Activated CD4-positive, alpha-beta T cell treated with anti-CD3 and anti-CD28 coated beads, Interleukin-2, amount 10 ng/mL, durations not matched to agents 24 days and 14 days (primary cell): ENCODE measurements at regions of chr10 and their contacts with region 1.

Region 1: DNA sequence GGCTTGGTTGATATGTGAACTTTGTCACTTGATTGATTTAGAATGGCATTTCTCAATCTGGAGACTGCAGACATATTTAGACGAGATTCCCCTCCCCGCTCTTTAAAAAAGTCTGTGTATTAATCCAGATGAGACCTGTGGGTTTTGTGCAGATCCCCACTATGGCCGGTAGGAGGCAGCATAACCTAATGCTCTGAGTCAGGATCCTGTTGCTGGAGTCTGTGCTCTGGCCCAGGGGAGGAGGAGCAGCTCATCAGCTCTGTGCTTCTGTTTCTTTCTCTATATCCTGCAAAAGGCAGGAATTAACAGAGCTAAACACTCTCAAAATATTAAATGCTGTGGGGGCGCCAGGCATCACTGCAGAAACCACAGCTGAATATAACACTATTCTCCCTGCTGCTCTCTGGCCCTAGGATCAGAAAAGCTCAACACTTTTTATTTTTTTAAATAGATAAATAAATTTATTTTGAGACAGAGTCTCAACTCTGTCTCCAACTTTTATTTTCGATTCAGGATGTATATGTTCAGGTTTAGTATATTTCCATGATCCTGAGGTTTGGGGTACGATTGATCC is 23.9 kb upstream of the SEPHS1 start:
- DNase-seq: peak; percentile 92
- H3K4me3 Mint-ChIP-seq: no peak overlapping the region
- H3K27ac Mint-ChIP-seq: no peak overlapping the region
- H3K4me1 Mint-ChIP-seq: no peaks in the 10 kb centered on the region
- H3K27me3 Mint-ChIP-seq: no peaks in the 10 kb centered on the region

Region 2: DNA sequence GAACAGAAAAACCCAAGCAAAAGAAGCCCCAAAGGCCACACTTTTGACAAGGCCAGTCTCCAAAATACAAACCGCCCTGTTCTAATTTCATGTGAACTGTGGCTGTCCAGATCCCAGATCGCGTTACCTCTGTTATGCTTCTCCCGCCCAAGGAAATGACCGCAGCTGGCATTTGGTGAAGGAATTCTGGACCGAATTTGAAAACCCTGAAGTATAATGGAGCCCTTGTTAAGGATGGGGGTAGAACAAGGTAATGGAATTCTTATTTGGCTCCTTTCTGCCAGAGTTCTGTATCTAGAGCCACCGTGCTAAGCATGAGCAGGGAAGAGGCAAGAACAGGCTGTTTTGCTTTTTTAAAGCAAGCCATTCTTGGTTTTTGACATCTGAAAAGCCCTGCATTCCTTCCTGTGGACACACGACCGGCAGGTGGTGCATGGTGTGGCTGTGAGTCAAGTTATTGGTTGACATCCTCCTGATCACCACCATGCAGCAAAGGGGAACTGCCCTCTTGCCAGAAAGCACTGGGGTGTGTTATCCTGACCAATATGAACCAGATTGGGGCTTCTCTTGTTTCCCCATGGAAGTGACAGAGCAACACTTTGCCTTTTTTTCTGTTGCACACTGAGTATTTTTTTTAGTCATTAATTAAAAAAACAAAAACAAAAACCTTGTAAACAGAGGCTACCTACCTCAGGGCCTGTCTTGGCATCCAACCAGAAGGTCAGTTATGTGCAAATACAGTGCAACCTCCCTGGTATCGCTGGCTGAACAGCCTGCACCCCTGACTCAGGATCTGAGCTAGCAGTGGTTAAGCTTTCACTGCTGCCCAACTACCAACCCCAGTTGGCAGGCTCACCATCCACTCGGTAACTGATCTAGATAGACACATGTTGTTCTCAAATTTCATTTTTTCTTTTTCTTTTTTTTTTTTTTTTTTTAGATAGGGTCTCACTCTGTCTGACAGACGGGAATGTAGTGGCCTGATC is 152.0 kb before region 1 on chr10:
- intact Hi-C with region 1: no loop called
- DNase-seq: no peak
- H3K4me3 Mint-ChIP-seq: no peak overlapping the region
- H3K27ac Mint-ChIP-seq: no peak overlapping the region
- H3K4me1 Mint-ChIP-seq: peaks cover 4% of the 10 kb centered on the region
- H3K27me3 Mint-ChIP-seq: no peaks in the 10 kb centered on the region

Region 3: DNA sequence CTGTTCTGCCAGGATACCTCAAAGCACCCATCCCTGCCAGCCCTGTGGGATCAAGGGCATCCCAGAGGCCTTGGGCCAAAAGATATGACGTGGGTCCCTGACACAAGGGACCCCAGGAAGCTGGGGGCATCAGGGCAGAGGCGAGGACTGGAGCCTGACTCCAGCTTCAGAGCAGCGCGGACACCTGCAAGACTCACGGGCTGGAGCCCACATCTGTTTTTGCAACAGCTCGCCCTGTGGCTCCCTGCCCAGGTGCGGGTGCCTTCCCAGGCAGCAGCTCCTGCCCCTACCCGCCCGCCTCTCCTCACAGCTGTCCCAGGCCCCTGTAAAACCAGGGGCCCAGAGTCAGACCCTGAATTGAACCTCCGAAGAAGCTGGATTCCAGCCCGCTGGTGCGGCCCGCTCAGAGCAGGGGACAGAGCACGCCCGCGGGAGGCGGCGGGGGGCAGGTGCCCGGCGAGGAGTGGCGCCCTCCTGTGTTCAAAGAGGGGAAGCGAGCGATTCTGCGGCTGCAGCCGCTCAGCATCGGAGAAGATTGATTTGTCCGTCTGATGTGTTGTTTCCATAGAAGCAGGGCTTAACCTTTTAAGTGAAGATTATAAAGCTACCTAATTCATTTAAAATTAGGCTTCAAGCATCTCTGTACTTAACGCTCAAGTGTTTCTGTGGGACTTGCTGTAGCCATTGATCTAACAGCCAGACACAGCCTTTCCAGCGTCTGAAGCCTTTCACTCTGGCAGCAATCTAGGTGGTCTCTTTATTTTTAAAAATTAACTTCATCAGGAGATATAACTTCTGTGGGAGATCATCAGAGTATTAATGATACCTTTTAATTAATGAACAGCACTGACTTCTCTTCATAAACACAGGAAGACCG is 68.4 kb after region 1 on chr10:
- intact Hi-C with region 1: loop called (anchors 1 kb)
- DNase-seq: peak; percentile 88
- H3K4me3 Mint-ChIP-seq: peak overlapping the region; percentile 55
- H3K27ac Mint-ChIP-seq: no peak overlapping the region
- H3K4me1 Mint-ChIP-seq: peaks cover 7% of the 10 kb centered on the region
- H3K27me3 Mint-ChIP-seq: peaks cover 53% of the 10 kb centered on the region

Region 4: GRCh38 chr10:13536674-13537366 is 164.8 kb after region 1 on chr10:
- intact Hi-C with region 1: loop called (anchors 2 kb)
- DNase-seq: peak; percentile 70
- H3K4me3 Mint-ChIP-seq: no peak overlapping the region
- H3K27ac Mint-ChIP-seq: no peak overlapping the region
- H3K4me1 Mint-ChIP-seq: no peaks in the 10 kb centered on the region
- H3K27me3 Mint-ChIP-seq: peaks cover 27% of the 10 kb centered on the region

Region 5: DNA sequence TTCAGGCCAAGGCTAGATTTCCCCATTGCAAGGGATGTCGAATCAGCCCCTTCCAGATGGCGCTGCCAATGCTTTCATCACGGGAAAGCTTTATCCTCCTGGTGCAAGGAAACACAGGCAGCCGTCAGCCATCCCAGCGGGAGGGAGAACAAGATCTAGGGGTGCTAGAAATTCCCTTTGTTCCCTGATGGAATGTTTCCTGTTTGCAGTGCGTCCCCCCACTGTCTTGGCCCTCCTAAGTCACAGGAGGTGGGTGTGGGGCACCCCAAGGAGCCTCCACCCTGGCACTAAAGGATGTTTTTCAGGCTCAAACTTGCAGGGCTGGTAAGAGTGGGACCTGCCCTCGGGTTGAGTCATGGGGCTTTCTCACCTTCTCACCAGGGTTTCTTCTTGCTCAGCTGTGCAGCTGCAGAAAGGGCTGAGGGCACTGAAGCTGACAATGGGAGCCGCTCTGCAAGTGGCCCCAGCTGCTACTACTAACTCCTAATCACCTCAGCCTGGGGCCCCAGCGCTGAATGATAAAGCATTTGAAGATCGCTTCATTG is 318.4 kb after region 1 on chr10:
- intact Hi-C with region 1: no loop called
- DNase-seq: no peak
- H3K4me3 Mint-ChIP-seq: no peak overlapping the region
- H3K27ac Mint-ChIP-seq: no peak overlapping the region
- H3K4me1 Mint-ChIP-seq: no peaks in the 10 kb centered on the region
- H3K27me3 Mint-ChIP-seq: no peaks in the 10 kb centered on the region

Region 6: DNA sequence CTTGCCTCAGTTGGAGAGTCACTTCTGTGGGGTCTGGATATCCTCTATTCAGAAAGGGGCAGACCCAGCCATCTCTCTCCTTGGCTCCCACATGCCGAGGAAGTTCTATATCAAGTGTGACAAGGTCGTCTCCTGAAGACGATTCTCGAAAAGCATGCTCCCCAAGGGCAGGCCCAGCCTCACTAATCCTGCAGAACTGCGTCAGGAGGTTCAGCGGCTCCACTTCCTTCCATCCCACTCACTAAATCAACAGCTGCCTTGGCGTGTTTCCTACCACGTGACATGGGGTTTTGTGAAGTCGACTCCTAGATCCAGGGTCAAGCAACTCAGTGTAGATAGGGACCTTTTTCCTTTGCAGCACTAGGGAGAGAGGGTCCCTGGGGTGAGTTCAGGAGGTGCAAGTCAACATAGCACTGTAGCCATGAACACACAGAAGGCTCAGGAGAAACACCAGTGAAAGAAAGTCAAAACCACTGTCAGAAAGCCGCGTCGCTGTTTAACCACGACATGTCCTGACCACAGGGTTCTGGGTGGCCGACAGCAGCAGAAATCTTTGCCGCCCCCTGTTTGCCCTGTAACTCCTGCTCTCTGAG is 371.2 kb after region 1 on chr10:
- intact Hi-C with region 1: no loop called
- DNase-seq: no peak
- H3K4me3 Mint-ChIP-seq: no peak overlapping the region
- H3K27ac Mint-ChIP-seq: no peak overlapping the region
- H3K4me1 Mint-ChIP-seq: peaks cover 4% of the 10 kb centered on the region
- H3K27me3 Mint-ChIP-seq: peaks cover 26% of the 10 kb centered on the region

Region 7: GRCh38 chr10:14826076-14826829 is 1454.3 kb after region 1 on chr10:
- intact Hi-C with region 1: no loop called
- DNase-seq: no peak
- H3K4me3 Mint-ChIP-seq: no peak overlapping the region
- H3K27ac Mint-ChIP-seq: no peak overlapping the region
- H3K4me1 Mint-ChIP-seq: peaks cover 7% of the 10 kb centered on the region
- H3K27me3 Mint-ChIP-seq: peaks cover 12% of the 10 kb centered on the region